Spleen (tissue), 13 donors: ENCODE measurements at regions of chr18 and their contacts with region 1.

Region 1: GRCh38 chr18:22563098-22563707 is 145.5 kb upstream of the CTAGE1 start:
- DNase-seq: no peak
- H3K4me3 ChIP-seq: peak overlapping the region in 3 of 8 donors; percentile 6 to 48 (median 21)
- H3K27ac ChIP-seq: peak overlapping the region in 5 of 8 donors; percentile 44 to 90 (median 84)
- H3K4me1 ChIP-seq: peaks cover 0 to 25% (median 14%) of the 10 kb centered on the region in 6 donors
- H3K27me3 ChIP-seq: peaks cover 0 to 63% (median 14%) of the 10 kb centered on the region in 7 donors
- CTCF ChIP-seq: peak; percentile 38 to 81 (median 63)
- POLR2A ChIP-seq: no peak

Region 2: DNA sequence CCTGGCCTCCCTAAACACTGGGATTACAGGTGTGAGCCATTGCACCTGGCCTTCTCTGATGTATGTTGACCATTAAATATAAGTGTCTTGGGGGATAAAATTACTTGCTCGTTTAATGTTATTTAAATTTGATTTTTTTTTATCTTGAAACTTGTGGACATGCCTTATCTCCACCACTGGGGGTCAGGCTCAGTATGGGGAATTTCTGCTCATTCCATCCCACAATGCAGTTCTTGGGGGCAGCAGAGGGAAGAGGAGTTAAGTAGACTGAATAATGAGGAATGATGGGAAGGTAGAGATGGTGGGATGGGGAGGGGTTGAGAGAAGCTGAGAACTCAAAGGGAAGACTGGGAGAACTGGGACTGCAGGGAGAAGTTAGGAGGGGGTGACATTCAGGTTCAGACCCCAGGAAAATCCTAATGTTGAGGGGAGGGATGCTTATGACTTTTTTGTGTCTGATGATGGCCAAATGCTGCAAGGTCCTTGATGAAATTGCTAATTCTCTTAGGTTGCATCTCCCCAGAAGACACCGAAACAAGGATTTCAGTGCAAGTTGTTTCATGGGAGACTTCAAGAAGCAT is 648.4 kb before region 1 on chr18:
- intact Hi-C with region 1: loop called (anchors 10 kb)
- DNase-seq: no peak
- H3K4me3 ChIP-seq: no peak overlapping the region
- H3K27ac ChIP-seq: no peak overlapping the region
- H3K4me1 ChIP-seq: no peaks in the 10 kb centered on the region
- H3K27me3 ChIP-seq: no peaks in the 10 kb centered on the region
- CTCF ChIP-seq: peak in 9 of 11 experiments; percentile 11 to 71 (median 42)
- POLR2A ChIP-seq: no peak

Region 3: DNA sequence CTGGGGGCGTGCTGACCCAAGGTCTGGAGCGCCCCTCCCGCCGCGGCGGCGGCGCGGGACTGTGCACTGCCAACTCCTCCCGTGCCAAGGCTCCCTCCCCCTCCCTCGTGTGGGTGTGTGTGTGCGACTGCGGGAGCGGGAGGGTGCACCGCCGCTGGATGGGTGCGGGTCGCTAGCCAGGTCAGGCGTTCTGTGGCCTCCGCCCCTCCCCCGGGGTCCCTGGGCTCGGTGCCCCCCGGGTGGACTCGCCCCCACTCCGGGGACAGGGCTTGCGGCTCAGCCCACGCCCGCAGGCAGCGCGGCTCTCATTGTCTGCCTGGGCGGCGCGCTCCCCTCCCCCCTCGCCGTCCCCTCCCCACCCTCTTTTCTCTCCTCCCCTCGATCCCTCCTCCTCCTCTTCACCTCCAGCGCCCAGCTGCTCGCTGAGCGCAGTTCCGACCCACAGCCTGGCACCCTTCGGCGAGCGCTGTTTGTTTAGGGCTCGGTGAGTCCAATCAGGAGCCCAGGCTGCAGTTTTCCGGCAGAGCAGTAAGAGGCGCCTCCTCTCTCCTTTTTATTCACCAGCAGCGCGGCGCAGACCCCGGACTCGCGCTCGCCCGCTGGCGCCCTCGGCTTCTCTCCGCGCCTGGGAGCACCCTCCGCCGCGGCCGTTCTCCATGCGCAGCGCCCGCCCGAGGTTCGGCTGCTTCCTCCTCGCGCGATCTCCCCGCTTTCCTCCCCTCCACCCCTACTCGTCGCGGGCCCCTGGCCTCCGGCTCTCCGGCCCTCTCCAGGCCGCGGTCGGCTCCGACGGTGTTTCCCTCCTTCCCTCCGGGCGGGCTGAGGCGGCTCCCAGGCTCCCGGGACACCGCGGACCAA is 394.0 kb before region 1 on chr18 and contains the start of gene GATA6:
- intact Hi-C with region 1: loop called (anchors 10 kb)
- DNase-seq: peak; percentile 84
- H3K4me3 ChIP-seq: peak within 1 kb of the TSS; percentile 44 to 86 (median 64)
- H3K27ac ChIP-seq: peak within 1 kb of the TSS; percentile 77 to 93 (median 90)
- H3K4me1 ChIP-seq: peaks cover 3 to 65% (median 37%) of the 10 kb centered on the region in 6 donors
- H3K27me3 ChIP-seq: peaks cover 10 to 100% (median 83%) of the 10 kb centered on the region in 7 donors
- CTCF ChIP-seq: peak in 6 of 11 experiments; percentile 14 to 29 (median 24)
- POLR2A ChIP-seq: peak in 1 of 3 donors; percentile 85
- total RNA-seq, gene GATA6: 27.4 to 65.3 (median 42.3) TPM

Region 4: GRCh38 chr18:22194151-22194598 is 369.0 kb before region 1 on chr18:
- intact Hi-C with region 1: loop called (anchors 10 kb)
- DNase-seq: no peak
- H3K4me3 ChIP-seq: no peak overlapping the region
- H3K27ac ChIP-seq: peak overlapping the region in 6 of 8 donors; percentile 3 to 66 (median 46)
- H3K4me1 ChIP-seq: peaks cover 7 to 95% (median 31%) of the 10 kb centered on the region in 6 donors
- H3K27me3 ChIP-seq: peaks cover 0 to 7% (median 0%) of the 10 kb centered on the region in 7 donors
- CTCF ChIP-seq: no peak
- POLR2A ChIP-seq: no peak

Region 5: GRCh38 chr18:22494771-22495170 is 68.4 kb before region 1 on chr18:
- intact Hi-C with region 1: loop called (anchors 10 kb)
- DNase-seq: no peak
- H3K4me3 ChIP-seq: no peak overlapping the region
- H3K27ac ChIP-seq: no peak overlapping the region
- H3K4me1 ChIP-seq: peaks cover 0 to 4% (median 0%) of the 10 kb centered on the region in 6 donors
- H3K27me3 ChIP-seq: no peaks in the 10 kb centered on the region
- CTCF ChIP-seq: no peak
- POLR2A ChIP-seq: no peak

Region 6: GRCh38 chr18:23049698-23050373 is 486.6 kb after region 1 on chr18:
- intact Hi-C with region 1: no loop called
- DNase-seq: no peak
- H3K4me3 ChIP-seq: no peak overlapping the region
- H3K27ac ChIP-seq: no peak overlapping the region
- H3K4me1 ChIP-seq: peaks cover 0 to 20% (median 10%) of the 10 kb centered on the region in 6 donors
- H3K27me3 ChIP-seq: peaks cover 0 to 8% (median 0%) of the 10 kb centered on the region in 7 donors
- CTCF ChIP-seq: no peak
- POLR2A ChIP-seq: no peak